Activated naive CD8-positive, alpha-beta T cell treated with anti-CD3 and anti-CD28 coated beads, Interleukin-2, amount 10 ng/mL, durations not matched to agents 7 days and 5 days (primary cell): ENCODE measurements at regions of chr3 and their contacts with region 1.

Region 1: GRCh38 chr3:49120438-49121131 is at the start of gene USP19:
- DNase-seq: peak; percentile 95
- ATAC-seq: peak; percentile 93
- H3K4me3 Mint-ChIP-seq: peak within 1 kb of the TSS; percentile 92
- H3K27ac Mint-ChIP-seq: peak within 1 kb of the TSS; percentile 89
- H3K4me1 Mint-ChIP-seq: peaks cover 5% of the 10 kb centered on the region
- H3K27me3 Mint-ChIP-seq: no peaks in the 10 kb centered on the region
- total RNA-seq, gene USP19: 77.8 to 78.2 TPM

Region 2: GRCh38 chr3:49076646-49077045 is 43.9 kb before region 1 on chr3:
- POLR2A ChIA-PET with region 1: no interaction called
- DNase-seq: no peak
- ATAC-seq: no peak
- H3K4me3 Mint-ChIP-seq: no peak overlapping the region
- H3K27ac Mint-ChIP-seq: no peak overlapping the region
- H3K4me1 Mint-ChIP-seq: peaks cover 1% of the 10 kb centered on the region
- H3K27me3 Mint-ChIP-seq: no peaks in the 10 kb centered on the region

Region 3: GRCh38 chr3:49104483-49105291 is 15.9 kb before region 1 on chr3 and contains the start of gene QARS1:
- POLR2A ChIA-PET with region 1: interaction called, 23 read pairs
- DNase-seq: peak; percentile 87
- ATAC-seq: peak; percentile 97
- H3K4me3 Mint-ChIP-seq: peak within 1 kb of the TSS; percentile 99
- H3K27ac Mint-ChIP-seq: peak within 1 kb of the TSS; percentile 98
- H3K4me1 Mint-ChIP-seq: peaks cover 23% of the 10 kb centered on the region
- H3K27me3 Mint-ChIP-seq: no peaks in the 10 kb centered on the region
- total RNA-seq, gene QARS1: 223 to 237 TPM